ENCODE measurements at regions of chr5 and their contacts with region 1.

Region 1: GRCh38 chr5:149128023-149128875 is 13.0 kb upstream of the ABLIM3 start:
- DNase-seq: peak; percentile 40
- CTCF ChIP-seq: peak; percentile 41

Region 2: GRCh38 chr5:149074106-149074505 is 54.1 kb before region 1 on chr5:
- CTCF ChIA-PET with region 1: no interaction called
- POLR2A ChIA-PET with region 1: no interaction called
- DNase-seq: no peak
- CTCF ChIP-seq: no peak

Region 3: DNA sequence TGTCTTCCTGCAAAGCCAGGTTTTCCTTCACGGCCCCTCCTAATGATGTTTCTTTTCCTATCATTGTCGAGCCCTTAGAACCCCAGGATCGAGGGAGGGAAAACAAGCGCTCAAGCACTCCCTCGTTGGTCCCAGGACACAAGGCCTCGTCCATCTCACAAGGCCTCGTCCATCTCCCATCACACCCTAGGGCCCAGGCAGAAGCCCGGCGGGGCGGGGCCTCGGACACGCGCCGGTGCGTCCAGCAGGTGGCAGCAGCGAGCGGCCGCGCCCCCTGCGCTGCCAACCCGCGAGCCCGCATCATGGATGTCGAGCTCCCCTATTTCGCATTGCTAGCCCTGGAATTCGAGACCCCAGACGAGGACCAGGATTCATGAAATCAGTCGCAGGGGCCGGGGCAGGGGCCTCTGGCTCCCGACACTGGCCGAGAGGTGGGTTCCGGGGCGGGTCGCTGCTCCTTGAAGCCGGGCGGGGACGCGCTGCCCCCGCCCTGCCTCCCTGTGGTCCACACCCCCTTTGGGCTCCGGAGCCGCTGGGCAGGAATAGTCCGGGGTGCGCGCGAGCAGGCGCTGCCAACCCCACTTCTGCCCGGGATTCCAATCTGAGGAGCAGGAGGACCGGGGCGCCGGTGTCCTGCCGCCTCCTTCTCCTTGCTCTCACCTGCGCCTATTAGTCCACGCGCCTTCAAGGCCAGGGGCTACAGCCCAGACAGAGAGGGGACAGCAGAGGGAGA is 13.1 kb after region 1 on chr5 and contains the start of gene ABLIM3:
- CTCF ChIA-PET with region 1: interaction called, 28 read pairs
- POLR2A ChIA-PET with region 1: no interaction called
- DNase-seq: peak; percentile 84
- CTCF ChIP-seq: peak; percentile 87

Region 4: DNA sequence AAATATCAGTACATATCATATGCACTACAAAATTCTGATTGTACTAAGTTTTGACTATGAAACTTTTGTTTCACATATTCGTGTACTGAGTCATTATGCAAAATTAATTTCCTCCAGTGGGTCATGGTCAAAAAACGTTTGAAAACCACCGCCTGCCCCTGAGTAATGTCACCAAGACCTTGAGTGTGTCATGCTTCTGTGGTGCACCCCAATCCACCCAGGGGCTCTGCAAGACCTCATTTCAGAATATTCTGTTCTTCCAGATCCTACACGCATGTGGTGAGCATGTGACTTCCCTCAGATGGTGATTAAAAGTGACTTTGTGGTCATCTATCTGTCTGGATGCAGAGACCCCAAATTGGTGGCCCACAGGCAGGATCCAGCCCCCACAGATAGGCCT is 44.0 kb after region 1 on chr5:
- CTCF ChIA-PET with region 1: no interaction called
- POLR2A ChIA-PET with region 1: no interaction called
- DNase-seq: peak; percentile 16
- CTCF ChIP-seq: no peak

Region 5: GRCh38 chr5:149228618-149229297 is 100.5 kb after region 1 on chr5:
- CTCF ChIA-PET with region 1: no interaction called
- POLR2A ChIA-PET with region 1: no interaction called
- DNase-seq: no peak
- CTCF ChIP-seq: no peak

Measured in GM10248 (cell line).